Ovary (tissue), 10 donors: ENCODE measurements at regions of chr10 and their contacts with region 1.

Region 1: DNA sequence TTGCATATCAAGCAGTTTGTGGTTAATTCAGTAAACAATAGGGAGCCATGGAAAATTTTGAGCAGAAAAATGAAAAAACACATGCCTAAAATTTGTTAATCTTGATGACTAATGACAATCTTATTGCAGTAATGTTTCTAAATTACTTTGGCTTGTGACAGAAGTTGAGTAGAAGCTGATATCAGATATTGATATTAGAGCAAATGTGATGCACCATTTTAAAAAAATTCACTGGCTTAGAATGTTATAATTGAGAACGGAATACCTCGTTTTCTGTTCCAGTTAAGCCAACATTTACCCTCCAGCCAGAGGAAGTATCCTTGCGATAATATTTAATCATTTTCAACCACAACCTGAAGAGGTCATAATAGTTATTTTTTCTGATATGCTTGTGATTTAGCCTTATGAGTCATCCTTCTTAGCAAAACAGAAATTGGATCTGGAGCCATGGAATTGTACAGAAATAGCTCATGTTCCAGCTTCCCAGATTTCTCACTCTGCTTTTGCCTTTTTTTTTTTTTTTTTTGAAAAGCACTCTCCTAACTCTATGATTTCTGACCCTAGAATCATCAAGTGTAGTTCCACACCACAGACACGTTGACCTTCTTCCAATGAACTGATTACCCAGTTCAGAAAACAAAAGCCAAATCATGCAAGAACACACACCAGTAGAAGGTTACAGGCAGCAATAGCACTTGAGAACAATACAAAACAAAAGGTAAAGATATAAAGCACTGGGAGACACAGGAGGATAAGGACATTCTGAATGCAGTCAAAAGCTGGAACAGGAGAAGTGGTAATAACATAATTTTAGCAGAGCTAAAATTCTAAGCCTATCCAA is 96.8 kb upstream of the PHYHIPL start:
- DNase-seq: no peak
- H3K4me3 ChIP-seq: no peak overlapping the region
- H3K27ac ChIP-seq: peak overlapping the region in 1 of 2 donors; percentile 46
- H3K4me1 ChIP-seq: peaks cover 16% of the 10 kb centered on the region
- H3K27me3 ChIP-seq: no peaks in the 10 kb centered on the region
- CTCF ChIP-seq: no peak
- EP300 ChIP-seq: no peak
- POLR2A ChIP-seq: no peak

Region 2: DNA sequence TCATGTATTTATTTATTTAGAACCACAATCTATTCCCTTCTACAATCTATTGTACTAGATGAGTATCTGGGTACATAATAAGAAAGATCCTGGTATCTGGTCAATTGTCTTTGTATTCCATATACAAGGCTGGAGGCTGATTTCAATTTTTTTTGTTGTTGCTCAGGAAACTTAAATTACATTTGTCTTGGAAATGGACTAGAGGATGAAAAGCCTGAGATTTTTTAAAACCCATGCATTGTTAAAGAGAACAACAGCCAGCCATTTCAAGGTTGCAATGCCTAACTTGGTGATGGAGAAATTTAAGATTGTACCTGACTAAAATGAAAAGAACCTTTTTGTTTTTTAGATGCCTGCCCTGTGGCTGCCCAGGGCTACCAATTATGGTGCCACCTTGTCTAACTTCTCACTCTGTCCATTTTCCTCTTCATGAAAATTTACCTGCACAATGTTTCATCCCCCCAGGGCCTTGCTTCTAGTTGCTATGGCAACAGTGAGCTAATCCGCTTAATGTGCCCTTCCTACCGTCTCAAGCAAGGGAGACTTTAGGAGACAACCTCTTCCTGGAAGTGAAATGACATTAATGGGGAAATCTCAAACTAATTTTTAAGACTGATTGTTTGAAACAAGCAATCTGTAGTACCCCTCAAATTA is 106.9 kb before region 1 on chr10:
- intact Hi-C with region 1: no loop called
- DNase-seq: no peak
- H3K4me3 ChIP-seq: no peak overlapping the region
- H3K27ac ChIP-seq: no peak overlapping the region
- H3K4me1 ChIP-seq: peaks cover 4% of the 10 kb centered on the region
- H3K27me3 ChIP-seq: no peaks in the 10 kb centered on the region
- CTCF ChIP-seq: no peak
- EP300 ChIP-seq: no peak
- POLR2A ChIP-seq: no peak

Region 3: GRCh38 chr10:59019603-59020002 is 60.0 kb before region 1 on chr10:
- intact Hi-C with region 1: loop called in 1 of 4 experiments (anchors 10 kb)
- DNase-seq: no peak
- H3K4me3 ChIP-seq: no peak overlapping the region
- H3K27ac ChIP-seq: peak overlapping the region in 1 of 2 donors; percentile 69
- H3K4me1 ChIP-seq: peaks cover 2% of the 10 kb centered on the region
- H3K27me3 ChIP-seq: no peaks in the 10 kb centered on the region
- CTCF ChIP-seq: no peak
- EP300 ChIP-seq: no peak
- POLR2A ChIP-seq: no peak